Left lung (tissue), 14 donors: ENCODE measurements at regions of chr11 and their contacts with region 1.

Region 1: GRCh38 chr11:22169833-22170232 is 23.1 kb upstream of the ANO5 start:
- DNase-seq: no peak
- ATAC-seq: no peak
- H3K4me3 ChIP-seq: no peak overlapping the region
- H3K27ac ChIP-seq: no peak overlapping the region
- H3K4me1 ChIP-seq: no peaks in the 10 kb centered on the region
- H3K27me3 ChIP-seq: no peaks in the 10 kb centered on the region
- CTCF ChIP-seq: peak in 1 of 2 donors; percentile 15

Region 2: GRCh38 chr11:21933095-21933494 is 236.7 kb before region 1 on chr11:
- intact Hi-C with region 1: no loop called
- DNase-seq: no peak
- ATAC-seq: no peak
- H3K4me3 ChIP-seq: no peak overlapping the region
- H3K27ac ChIP-seq: no peak overlapping the region
- H3K4me1 ChIP-seq: no peaks in the 10 kb centered on the region
- H3K27me3 ChIP-seq: no peaks in the 10 kb centered on the region
- CTCF ChIP-seq: peak in 1 of 2 donors; percentile 26

Region 3: DNA sequence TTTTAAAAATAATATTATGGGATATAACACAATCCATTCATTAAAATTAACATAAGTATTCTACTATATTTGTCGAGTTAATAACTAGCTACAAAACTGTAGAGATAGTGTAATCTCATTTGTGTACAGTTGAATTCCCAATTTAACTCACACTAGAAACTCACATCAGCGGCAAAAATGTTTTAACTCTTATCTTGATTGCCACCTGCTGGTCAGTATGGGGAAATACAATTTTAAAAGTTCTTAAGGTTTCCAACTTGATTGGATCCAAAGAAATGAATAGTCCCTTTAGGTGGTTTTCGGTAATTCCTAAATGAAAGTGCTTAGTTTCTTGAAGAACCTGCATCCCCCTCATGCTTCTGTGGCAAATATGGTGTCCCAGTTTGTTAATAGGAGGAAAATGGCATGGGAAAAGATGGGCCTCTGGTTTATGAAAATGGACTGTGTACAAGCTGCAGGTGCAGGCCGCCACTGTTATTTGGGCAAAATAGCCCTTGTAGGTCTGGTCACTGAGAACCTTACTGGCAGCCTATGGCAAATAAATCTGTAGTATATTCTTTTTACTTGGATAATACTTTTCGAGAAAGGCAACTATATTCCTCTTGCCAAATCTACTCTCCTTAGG is 134.6 kb after region 1 on chr11:
- intact Hi-C with region 1: loop called in 1 of 2 experiments (anchors 10 kb)
- DNase-seq: peak in 2 of 4 donors; percentile 1 to 22
- ATAC-seq: peak; percentile 66
- H3K4me3 ChIP-seq: no peak overlapping the region
- H3K27ac ChIP-seq: no peak overlapping the region
- H3K4me1 ChIP-seq: no peaks in the 10 kb centered on the region
- H3K27me3 ChIP-seq: no peaks in the 10 kb centered on the region
- CTCF ChIP-seq: peak; percentile 49 to 56